OCI-LY7 (cell line): ENCODE measurements at regions of chr16 and their contacts with region 1.

Region 1: DNA sequence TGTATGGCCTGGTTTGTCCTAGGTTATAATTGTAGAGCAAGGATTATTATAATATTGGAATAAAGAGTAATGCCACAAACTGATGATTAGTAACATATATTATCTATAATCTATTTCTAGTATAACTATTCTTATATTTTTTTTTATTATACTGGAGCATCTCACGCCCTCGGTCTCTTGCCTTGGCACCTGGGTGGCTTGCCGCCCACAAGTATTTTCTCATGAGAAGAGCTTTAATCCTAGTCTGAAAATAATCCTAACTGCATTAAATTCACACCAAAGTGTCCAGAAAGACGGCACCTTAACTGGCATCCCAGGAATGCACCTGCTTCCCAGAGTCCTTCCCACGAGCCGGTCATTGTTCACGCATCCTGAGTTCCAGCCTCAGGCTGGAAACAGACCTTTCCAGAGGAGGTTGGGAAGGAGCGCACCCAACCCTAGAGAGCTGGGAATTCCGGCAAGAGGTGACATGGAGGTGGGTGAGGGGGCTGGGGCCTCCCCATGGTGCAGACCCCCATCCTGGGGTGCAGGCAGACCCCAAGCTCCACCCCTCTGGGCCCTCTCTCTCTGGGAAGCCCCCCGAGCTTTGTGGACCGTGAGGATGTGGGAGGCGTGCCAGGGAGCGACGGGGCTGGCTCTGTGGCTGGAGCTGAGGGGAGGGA is 15.9 kb downstream of the CHMP1A start:
- DNase-seq: no peak
- H3K4me3 ChIP-seq: no peak overlapping the region
- H3K27ac ChIP-seq: no peak overlapping the region
- H3K4me1 ChIP-seq: no peaks in the 10 kb centered on the region
- CTCF ChIP-seq: no peak; the same call in 1 of the 2 replicates

Region 2: DNA sequence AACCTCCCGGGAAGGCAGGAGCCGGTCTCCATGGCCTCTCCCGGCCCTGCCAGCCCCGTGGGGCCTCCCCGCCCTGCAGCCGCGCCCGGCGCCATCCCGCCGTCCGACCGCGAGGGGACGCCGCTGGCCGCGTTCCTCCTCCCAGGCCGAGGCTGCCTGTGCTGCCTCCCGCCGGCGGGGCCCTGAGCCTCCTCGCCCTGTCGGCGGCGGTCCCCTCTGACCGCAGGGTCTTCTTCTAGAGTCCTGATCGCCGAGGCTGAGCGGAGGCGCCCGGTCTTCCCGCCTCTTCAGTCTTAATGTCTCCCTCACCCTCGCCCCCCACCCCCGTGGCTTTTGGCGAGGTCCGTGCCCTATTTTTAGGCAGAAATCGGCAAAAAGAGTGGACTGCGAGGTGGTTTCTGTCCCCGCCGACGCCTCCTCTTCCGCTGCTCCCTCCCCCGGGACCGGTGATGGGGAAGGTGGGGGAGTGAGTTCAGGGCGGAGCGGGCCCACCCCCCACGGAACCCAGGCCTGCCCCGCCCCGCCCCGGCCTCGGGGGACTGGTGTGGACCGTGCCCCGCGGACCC is 66.8 kb before region 1 on chr16:
- CTCF ChIA-PET with region 1: no interaction called
- POLR2A ChIA-PET with region 1: no interaction called
- intact Hi-C with region 1: loop called (anchors 5 kb)
- DNase-seq: peak; percentile 61
- H3K4me3 ChIP-seq: peak overlapping the region; percentile 42
- H3K27ac ChIP-seq: no peak overlapping the region
- H3K4me1 ChIP-seq: peaks cover 23% of the 10 kb centered on the region
- CTCF ChIP-seq: peak; percentile 73

Region 3: GRCh38 chr16:89599451-89599858 is 42.1 kb before region 1 on chr16:
- CTCF ChIA-PET with region 1: no interaction called
- POLR2A ChIA-PET with region 1: no interaction called
- intact Hi-C with region 1: loop called (anchors 2 kb)
- DNase-seq: peak; percentile 45
- H3K4me3 ChIP-seq: no peak overlapping the region
- H3K27ac ChIP-seq: no peak overlapping the region
- H3K4me1 ChIP-seq: no peaks in the 10 kb centered on the region
- CTCF ChIP-seq: peak; percentile 65